Activated naive CD4-positive, alpha-beta T cell treated with anti-CD3 and anti-CD28 coated beads for 36 hours (primary cell): ENCODE measurements at regions of chr13 and their contacts with region 1.

Region 1: DNA sequence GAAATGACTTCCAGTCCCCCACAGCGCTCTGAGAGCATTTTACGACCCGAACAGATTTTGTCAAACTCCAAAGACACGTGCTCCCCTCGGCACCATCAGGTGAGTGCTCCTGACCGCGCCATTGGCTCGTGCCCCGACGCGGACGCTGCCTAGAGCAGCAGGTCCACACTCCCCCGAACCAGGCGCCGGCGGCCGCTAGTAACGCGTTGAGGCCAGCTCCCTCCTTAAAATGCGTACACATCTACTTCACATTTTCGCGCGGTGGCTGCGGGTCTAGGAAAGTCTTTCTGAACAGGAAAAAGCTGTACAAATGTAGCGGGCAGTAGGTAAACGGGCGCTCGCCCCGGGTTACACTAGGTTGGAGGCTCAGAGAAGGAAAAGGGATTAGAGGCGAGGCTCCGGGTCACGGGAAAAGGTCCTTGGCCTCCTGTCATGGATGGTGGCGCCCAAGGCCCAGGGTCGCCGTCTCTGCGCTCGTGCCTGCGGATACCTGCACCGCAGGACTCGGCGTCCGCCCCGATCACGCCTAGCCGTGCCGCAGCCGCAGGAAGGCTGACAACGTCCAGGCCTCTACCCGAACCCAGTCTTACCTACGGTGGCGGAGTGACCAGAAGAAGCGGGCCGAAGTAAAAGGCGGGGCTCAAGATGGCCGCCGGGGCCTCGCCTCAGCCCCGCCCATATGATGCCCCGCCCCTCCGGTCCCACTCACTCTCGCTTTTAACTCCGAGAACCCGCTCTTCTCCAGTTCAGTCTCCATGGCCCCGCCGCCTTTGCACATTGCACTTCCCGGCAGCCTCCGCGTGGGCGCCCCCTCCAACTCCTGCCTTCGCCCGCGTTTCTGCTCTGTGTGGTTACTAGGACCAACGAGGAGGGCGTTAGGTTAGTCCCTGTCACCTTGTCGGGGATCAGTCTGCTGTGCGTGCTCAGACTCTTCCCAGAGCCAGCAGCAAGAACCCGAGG is at the start of gene ESD:
- DNase-seq: peak; percentile 98
- H3K4me3 Mint-ChIP-seq: peak within 1 kb of the TSS; percentile 93
- H3K27ac Mint-ChIP-seq: peak within 1 kb of the TSS; percentile 95
- H3K4me1 Mint-ChIP-seq: peaks cover 32% of the 10 kb centered on the region
- H3K27me3 Mint-ChIP-seq: no peaks in the 10 kb centered on the region
- total RNA-seq, gene ESD: 150 to 153 TPM

Region 2: GRCh38 chr13:46052319-46053161 is 744.3 kb before region 1 on chr13 and contains the start of gene ZC3H13:
- CTCF ChIA-PET with region 1: no interaction called
- intact Hi-C with region 1: loop called (anchors 5 kb)
- DNase-seq: peak; percentile 97
- H3K4me3 Mint-ChIP-seq: peak within 1 kb of the TSS; percentile 81
- H3K27ac Mint-ChIP-seq: peak within 1 kb of the TSS; percentile 94
- H3K4me1 Mint-ChIP-seq: peaks cover 29% of the 10 kb centered on the region
- H3K27me3 Mint-ChIP-seq: peaks cover 4% of the 10 kb centered on the region
- total RNA-seq, gene ZC3H13: 38.2 to 42.2 TPM

Region 3: DNA sequence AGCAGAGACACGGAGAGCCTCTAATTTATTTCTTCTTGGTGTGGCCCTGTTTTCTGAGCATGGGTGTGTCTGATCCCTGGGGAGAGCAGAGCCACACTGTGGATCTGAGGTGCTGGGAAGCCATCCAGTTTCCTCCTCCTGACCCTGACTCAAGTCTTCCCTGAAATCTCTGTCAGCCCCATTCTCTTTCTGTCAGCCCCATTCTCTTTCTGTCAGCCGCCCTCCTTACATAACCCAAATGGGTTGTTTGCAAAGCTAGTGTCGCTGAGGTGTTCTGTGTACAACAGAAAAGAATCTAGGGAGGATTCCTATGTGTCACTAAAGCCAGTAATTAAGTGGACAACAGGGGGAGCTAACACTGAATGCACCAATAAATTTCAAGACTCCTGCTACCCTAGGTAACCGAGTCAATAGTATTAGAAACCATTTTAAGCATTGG is 193.6 kb before region 1 on chr13:
- CTCF ChIA-PET with region 1: no interaction called
- intact Hi-C with region 1: loop called (anchors 5 kb)
- DNase-seq: no peak
- H3K4me3 Mint-ChIP-seq: no peak overlapping the region
- H3K27ac Mint-ChIP-seq: no peak overlapping the region
- H3K4me1 Mint-ChIP-seq: peaks cover 78% of the 10 kb centered on the region
- H3K27me3 Mint-ChIP-seq: no peaks in the 10 kb centered on the region

Region 4: GRCh38 chr13:46668302-46668720 is 128.5 kb before region 1 on chr13:
- CTCF ChIA-PET with region 1: no interaction called
- intact Hi-C with region 1: loop called (anchors 5 kb)
- DNase-seq: peak; percentile 58
- H3K4me3 Mint-ChIP-seq: peak overlapping the region; percentile 72
- H3K27ac Mint-ChIP-seq: peak overlapping the region; percentile 85
- H3K4me1 Mint-ChIP-seq: peaks cover 37% of the 10 kb centered on the region
- H3K27me3 Mint-ChIP-seq: no peaks in the 10 kb centered on the region

Region 5: GRCh38 chr13:46751811-46752635 is 44.8 kb before region 1 on chr13:
- CTCF ChIA-PET with region 1: no interaction called
- intact Hi-C with region 1: loop called (anchors 2 kb)
- DNase-seq: peak; percentile 74
- H3K4me3 Mint-ChIP-seq: no peak overlapping the region
- H3K27ac Mint-ChIP-seq: peak overlapping the region; percentile 57
- H3K4me1 Mint-ChIP-seq: peaks cover 14% of the 10 kb centered on the region
- H3K27me3 Mint-ChIP-seq: no peaks in the 10 kb centered on the region

Region 6: GRCh38 chr13:46812301-46812797 is 15.6 kb after region 1 on chr13:
- CTCF ChIA-PET with region 1: no interaction called
- intact Hi-C with region 1: loop called (anchors 1 kb)
- DNase-seq: no peak
- H3K4me3 Mint-ChIP-seq: no peak overlapping the region
- H3K27ac Mint-ChIP-seq: no peak overlapping the region
- H3K4me1 Mint-ChIP-seq: peaks cover 6% of the 10 kb centered on the region
- H3K27me3 Mint-ChIP-seq: peaks cover 7% of the 10 kb centered on the region

Region 7: GRCh38 chr13:47087841-47088240 is 291.0 kb after region 1 on chr13:
- CTCF ChIA-PET with region 1: no interaction called
- intact Hi-C with region 1: no loop called
- DNase-seq: no peak
- H3K4me3 Mint-ChIP-seq: no peak overlapping the region
- H3K27ac Mint-ChIP-seq: no peak overlapping the region
- H3K4me1 Mint-ChIP-seq: no peaks in the 10 kb centered on the region
- H3K27me3 Mint-ChIP-seq: no peaks in the 10 kb centered on the region

Region 8: GRCh38 chr13:48653472-48653939 is 1856.7 kb after region 1 on chr13 and contains the start of gene CYSLTR2:
- CTCF ChIA-PET with region 1: no interaction called
- intact Hi-C with region 1: loop called (anchors 5 kb)
- DNase-seq: peak; percentile 27
- H3K4me3 Mint-ChIP-seq: peak within 1 kb of the TSS; percentile 75
- H3K27ac Mint-ChIP-seq: peak within 1 kb of the TSS; percentile 82
- H3K4me1 Mint-ChIP-seq: peaks cover 29% of the 10 kb centered on the region
- H3K27me3 Mint-ChIP-seq: no peaks in the 10 kb centered on the region
- total RNA-seq, gene CYSLTR2: 1.3 to 1.7 TPM